ENCODE measurements at regions of chr10 and their contacts with region 1.

Region 1: DNA sequence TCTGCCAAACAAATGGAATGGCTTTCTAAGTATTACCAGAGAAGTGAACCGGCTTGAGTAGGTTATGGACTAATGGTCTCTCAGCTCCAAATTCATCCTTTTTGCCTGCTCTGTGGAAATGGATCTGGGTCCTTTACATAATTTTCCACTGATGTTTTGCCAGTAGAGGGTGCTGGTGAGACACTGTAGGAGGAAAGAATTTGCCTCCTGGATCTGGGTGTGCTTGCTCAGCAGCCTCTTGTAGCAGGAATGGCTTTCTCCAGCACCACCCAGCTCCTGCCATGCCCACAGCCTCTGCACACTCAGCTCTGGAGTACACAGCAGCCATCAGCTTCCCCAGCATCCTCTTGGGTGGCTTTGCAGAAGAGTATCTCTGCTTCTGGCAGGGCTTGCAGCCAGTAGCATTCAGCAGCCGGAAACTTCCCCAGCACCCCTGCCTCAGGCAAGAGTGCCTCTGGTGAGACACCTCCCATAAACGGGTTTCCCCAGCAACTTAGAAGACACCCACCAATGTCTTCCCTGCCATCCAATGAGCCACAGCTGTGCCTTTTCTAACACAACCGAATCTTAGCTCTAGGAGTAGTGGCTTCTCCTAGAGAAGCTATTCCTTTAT is 235.0 kb upstream of the PLPP4 start:
- DNase-seq: peak; percentile 48
- H3K4me3 Mint-ChIP-seq: no peak overlapping the region
- H3K27ac Mint-ChIP-seq: no peak overlapping the region
- H3K4me1 Mint-ChIP-seq: no peaks in the 10 kb centered on the region
- H3K27me3 Mint-ChIP-seq: peaks cover 16% of the 10 kb centered on the region
- CTCF ChIP-seq: peak; percentile 58

Region 2: DNA sequence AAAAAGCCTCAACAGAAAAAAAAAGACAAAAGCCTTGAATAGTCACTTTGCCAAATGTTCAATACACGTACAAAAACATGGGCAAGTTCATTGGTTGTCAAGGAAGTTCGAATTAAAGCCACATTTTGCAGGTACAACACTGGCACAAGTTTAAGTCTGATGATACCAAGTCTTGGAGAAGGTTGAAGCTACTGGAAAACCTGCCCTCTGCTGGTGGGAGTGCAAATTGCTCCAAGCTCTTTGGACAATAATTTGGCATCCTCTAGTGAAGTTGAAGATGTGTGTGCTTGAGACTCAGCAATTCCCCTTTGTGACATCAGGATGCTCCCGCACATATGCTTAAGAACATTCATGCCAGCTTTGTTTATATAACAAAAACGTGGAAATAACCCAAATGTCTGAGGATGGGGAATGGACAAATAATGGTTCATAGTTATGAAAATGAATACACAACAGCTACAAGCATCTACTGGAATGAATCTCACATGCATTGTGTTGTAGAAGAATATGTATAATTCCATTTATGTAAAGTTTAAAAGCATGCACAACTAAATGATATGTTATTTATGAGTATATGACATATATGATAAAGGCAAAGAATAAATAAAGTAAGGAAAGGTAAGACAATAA is 115.0 kb after region 1 on chr10:
- CTCF ChIA-PET with region 1: interaction called, 12 read pairs
- intact Hi-C with region 1: loop called (anchors 1 kb)
- DNase-seq: peak; percentile 53
- H3K4me3 Mint-ChIP-seq: no peak overlapping the region
- H3K27ac Mint-ChIP-seq: no peak overlapping the region
- H3K4me1 Mint-ChIP-seq: no peaks in the 10 kb centered on the region
- H3K27me3 Mint-ChIP-seq: no peaks in the 10 kb centered on the region
- CTCF ChIP-seq: peak; percentile 31